GM12878 (cell line): ENCODE measurements at regions of chr2 and their contacts with region 1.

Region 1: DNA sequence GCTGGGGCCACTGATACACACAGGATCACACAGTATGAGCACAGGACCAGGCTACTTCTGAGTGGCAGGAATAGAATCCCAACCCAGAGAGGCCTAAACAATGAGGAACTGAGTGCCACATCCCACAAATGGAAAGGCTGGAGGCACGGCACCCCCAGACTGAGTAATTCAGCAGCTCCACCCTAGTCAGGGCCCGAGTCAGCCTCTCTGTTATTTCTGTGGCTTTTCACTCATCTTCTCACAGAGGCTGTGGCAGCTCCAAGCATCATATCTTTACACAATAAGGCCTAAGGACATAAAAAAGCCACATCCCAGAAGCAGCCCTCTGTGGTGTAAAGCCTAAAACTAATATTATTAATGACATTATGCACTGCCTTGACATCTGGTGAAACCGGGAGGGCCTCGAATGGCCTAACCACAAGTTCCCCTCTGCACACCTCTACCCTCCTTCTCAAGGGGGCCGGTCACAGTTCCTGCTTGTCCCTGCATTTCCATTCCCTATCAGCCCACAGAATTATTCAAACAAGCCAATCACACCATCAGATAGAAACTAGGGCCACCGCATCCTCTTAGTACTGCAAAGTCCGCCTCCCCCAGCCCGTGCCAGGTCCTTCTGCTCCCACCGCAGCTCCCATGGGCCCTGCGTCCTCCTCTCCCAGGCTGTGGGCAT is 12.5 kb upstream of the MAL start:
- DNase-seq: peak; percentile 57
- ATAC-seq: peak; percentile 88
- H3K4me3 ChIP-seq: no peak overlapping the region
- H3K27ac ChIP-seq: peak overlapping the region; percentile 27; the same call in 1 of the 2 replicates
- H3K4me1 ChIP-seq: peaks cover 29% of the 10 kb centered on the region
- H3K27me3 ChIP-seq: no peaks in the 10 kb centered on the region
- CTCF ChIP-seq: no peak
- EP300 ChIP-seq: no peak
- POLR2A ChIP-seq: no peak
- RAD21 ChIP-seq: no peak

Region 2: GRCh38 chr2:94947097-94948016 is 65.7 kb before region 1 on chr2:
- CTCF ChIA-PET with region 1: no interaction called
- POLR2A ChIA-PET with region 1: no interaction called
- RAD21 ChIA-PET with region 1: no interaction called
- SMC1A ChIA-PET with region 1: no interaction called
- in situ Hi-C with region 1: no loop called
- intact Hi-C with region 1: no loop called
- DNase-seq: no peak
- ATAC-seq: no peak
- H3K4me3 ChIP-seq: no peak overlapping the region
- H3K27ac ChIP-seq: no peak overlapping the region
- H3K4me1 ChIP-seq: no peaks in the 10 kb centered on the region
- H3K27me3 ChIP-seq: no peaks in the 10 kb centered on the region
- CTCF ChIP-seq: no peak
- EP300 ChIP-seq: no peak
- POLR2A ChIP-seq: no peak
- RAD21 ChIP-seq: no peak

Region 3: DNA sequence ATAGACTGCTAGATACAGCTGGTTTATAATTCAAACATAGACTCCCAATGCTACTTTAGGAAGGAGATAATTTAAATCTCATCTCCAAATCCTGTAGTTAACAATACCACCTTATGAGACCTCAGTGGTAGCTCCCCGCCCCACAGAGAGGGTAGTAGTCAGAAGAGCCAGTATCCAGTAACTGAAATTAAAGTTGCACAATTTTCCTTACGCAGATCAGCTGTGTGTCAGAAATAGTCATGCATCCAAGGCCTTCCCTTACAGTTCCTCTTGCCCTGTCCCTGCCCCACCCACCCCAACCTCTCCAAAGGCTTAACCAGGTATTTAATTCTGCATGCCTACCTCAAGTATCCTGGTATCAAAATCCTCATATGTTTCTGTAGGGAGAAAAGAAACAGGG is 93.1 kb after region 1 on chr2:
- CTCF ChIA-PET with region 1: no interaction called
- POLR2A ChIA-PET with region 1: no interaction called
- RAD21 ChIA-PET with region 1: no interaction called
- SMC1A ChIA-PET with region 1: no interaction called
- in situ Hi-C with region 1: no loop called
- intact Hi-C with region 1: no loop called
- DNase-seq: no peak
- ATAC-seq: no peak
- H3K4me3 ChIP-seq: no peak overlapping the region
- H3K27ac ChIP-seq: no peak overlapping the region
- H3K4me1 ChIP-seq: no peaks in the 10 kb centered on the region
- H3K27me3 ChIP-seq: no peaks in the 10 kb centered on the region
- CTCF ChIP-seq: no peak
- EP300 ChIP-seq: no peak
- POLR2A ChIP-seq: no peak
- RAD21 ChIP-seq: no peak

Region 4: DNA sequence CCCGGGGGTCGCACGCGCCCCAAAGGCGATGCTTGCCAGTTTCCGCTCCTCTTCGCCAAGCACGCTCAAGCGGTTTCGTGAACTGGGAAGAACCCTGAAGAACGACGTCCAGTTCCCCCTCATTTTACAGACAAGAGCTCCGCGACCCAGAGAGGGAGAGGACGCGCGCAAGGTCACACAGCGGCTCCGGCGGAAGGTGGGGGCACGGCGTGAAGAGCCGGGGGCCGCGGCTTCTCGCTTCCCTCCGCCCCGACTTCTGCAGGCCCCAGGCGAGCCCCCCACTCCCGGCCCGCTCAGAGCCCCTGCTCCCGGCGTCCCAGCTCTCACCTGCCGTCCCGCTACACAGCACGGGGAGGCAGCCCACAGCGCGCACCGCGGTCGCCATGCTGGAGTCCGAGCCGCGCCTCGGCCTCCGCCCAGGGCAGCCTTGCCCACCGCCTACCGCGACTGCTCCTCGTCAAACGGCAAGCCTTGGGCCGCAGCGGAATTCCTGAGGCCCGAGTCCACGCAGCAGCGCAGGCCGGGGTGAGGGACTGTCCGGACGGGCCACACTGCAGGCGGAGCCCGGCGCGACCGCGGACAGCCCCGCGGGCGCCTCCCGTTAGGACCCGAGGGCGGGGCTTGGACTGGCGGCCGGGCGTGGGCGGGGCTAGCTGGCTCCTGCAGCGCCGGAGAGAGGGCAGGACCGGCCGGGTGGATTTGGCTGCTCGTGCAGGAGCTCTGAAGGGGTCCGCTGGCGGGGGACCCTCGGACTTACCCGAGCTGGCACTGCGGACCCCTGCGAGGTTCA is 108.6 kb after region 1 on chr2 and contains the start of gene MRPS5:
- CTCF ChIA-PET with region 1: no interaction called
- POLR2A ChIA-PET with region 1: no interaction called
- RAD21 ChIA-PET with region 1: no interaction called
- SMC1A ChIA-PET with region 1: no interaction called
- in situ Hi-C with region 1: no loop called
- intact Hi-C with region 1: no loop called
- DNase-seq: peak; percentile 13
- ATAC-seq: peak; percentile 93
- H3K4me3 ChIP-seq: peak within 1 kb of the TSS; percentile 93
- H3K27ac ChIP-seq: peak within 1 kb of the TSS; percentile 98
- H3K4me1 ChIP-seq: peaks cover 16% of the 10 kb centered on the region
- H3K27me3 ChIP-seq: no peaks in the 10 kb centered on the region
- CTCF ChIP-seq: 0 out of 6 replicates have a peak, but pooled peaks of 2 of the 3 experiments have one; percentile 5 to 23
- EP300 ChIP-seq: no peak
- POLR2A ChIP-seq: peak; percentile 94
- RAD21 ChIP-seq: no peak
- polyA plus RNA-seq, gene MRPS5: 54.8 to 77.0 TPM

Region 5: GRCh38 chr2:95159690-95160449 is 146.9 kb after region 1 on chr2 and contains the start of gene ZNF514:
- CTCF ChIA-PET with region 1: no interaction called
- POLR2A ChIA-PET with region 1: no interaction called
- RAD21 ChIA-PET with region 1: no interaction called
- SMC1A ChIA-PET with region 1: no interaction called
- in situ Hi-C with region 1: no loop called
- intact Hi-C with region 1: loop called (anchors 5 kb)
- DNase-seq: no peak
- ATAC-seq: peak; percentile 96
- H3K4me3 ChIP-seq: peak within 1 kb of the TSS; percentile 78
- H3K27ac ChIP-seq: no peak within 1 kb of the TSS
- H3K4me1 ChIP-seq: peaks cover 3% of the 10 kb centered on the region; the same call in 1 of the 2 replicates
- H3K27me3 ChIP-seq: no peaks in the 10 kb centered on the region
- CTCF ChIP-seq: no peak
- EP300 ChIP-seq: no peak
- POLR2A ChIP-seq: peak; percentile 34
- RAD21 ChIP-seq: no peak
- polyA plus RNA-seq, gene ZNF514: 5.8 to 7.2 TPM